SK-N-SH (cell line): ENCODE measurements at regions of chr13 and their contacts with region 1.

Region 1: GRCh38 chr13:26698392-26699196 is 62.0 kb downstream of the GPR12 start:
- DNase-seq: peak; percentile 87
- H3K4me3 ChIP-seq: peak overlapping the region in 1 of 2 experiments; percentile 15; a peak in 2 of 4 replicates
- H3K27ac ChIP-seq: no peak overlapping the region
- H3K4me1 ChIP-seq: peaks cover 0 to 4% of the 10 kb centered on the region in 2 experiments; a peak in 1 of 4 replicates
- H3K27me3 ChIP-seq: no peaks in the 10 kb centered on the region
- CTCF ChIP-seq: peak; percentile 96
- EP300 ChIP-seq: no peak
- RAD21 ChIP-seq: peak; percentile 100

Region 2: GRCh38 chr13:26202365-26202972 is 496.1 kb before region 1 on chr13:
- CTCF ChIA-PET with region 1: interaction called, 10 read pairs
- POLR2A ChIA-PET with region 1: no interaction called
- DNase-seq: no peak
- H3K4me3 ChIP-seq: no peak overlapping the region
- H3K27ac ChIP-seq: peak overlapping the region in 1 of 2 experiments; percentile 64; a peak in 3 of 4 replicates
- H3K4me1 ChIP-seq: peaks cover 0 to 18% of the 10 kb centered on the region in 2 experiments; a peak in 1 of 4 replicates
- H3K27me3 ChIP-seq: no peaks in the 10 kb centered on the region
- CTCF ChIP-seq: no peak
- EP300 ChIP-seq: no peak; a peak in 1 of 4 replicates
- RAD21 ChIP-seq: no peak

Region 3: DNA sequence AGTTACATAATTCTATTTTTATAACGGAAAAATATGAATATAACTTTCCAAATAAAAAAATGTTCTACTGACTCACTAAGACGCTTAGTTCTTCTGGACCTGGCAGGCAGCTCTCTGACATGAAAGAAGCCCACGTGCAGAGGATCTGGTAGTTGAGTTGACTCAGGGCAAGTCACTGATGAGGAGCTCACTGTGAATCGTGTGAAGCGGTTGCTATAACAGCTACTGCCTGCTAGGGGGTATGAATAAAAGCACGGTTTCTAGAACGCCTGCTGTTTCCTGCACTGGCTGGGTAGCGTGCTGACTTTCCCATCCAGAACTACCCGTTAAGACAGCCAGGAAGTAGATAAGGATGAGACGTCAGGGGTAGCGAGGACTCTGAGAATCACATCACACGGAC is 195.8 kb before region 1 on chr13:
- CTCF ChIA-PET with region 1: interaction called, 57 read pairs
- POLR2A ChIA-PET with region 1: no interaction called
- DNase-seq: no peak
- H3K4me3 ChIP-seq: no peak overlapping the region
- H3K27ac ChIP-seq: no peak overlapping the region
- H3K4me1 ChIP-seq: peaks cover 10 to 20% of the 10 kb centered on the region in 2 experiments; a peak in 3 of 4 replicates
- H3K27me3 ChIP-seq: no peaks in the 10 kb centered on the region
- CTCF ChIP-seq: no peak
- EP300 ChIP-seq: no peak
- RAD21 ChIP-seq: no peak

Region 4: DNA sequence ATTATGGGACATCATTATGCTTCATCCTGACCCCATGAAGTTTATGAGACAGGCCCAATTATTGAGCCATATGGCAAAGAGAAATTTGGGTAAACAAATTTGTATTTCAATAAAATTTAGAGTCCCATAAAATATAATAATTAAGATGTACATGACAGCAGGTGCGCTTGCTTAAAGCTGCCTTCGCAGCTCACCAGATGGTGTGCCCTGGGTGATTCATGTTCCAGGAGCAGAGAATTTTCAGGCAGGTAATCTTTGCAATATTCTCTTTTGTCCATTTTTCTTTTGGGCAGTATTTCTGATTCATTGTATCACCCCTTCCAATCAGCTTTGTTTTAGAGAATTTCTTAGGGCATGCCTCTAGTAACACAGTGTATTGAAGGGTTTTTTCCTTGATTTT is 180.7 kb before region 1 on chr13:
- CTCF ChIA-PET with region 1: no interaction called
- POLR2A ChIA-PET with region 1: no interaction called
- DNase-seq: no peak
- H3K4me3 ChIP-seq: no peak overlapping the region
- H3K27ac ChIP-seq: no peak overlapping the region
- H3K4me1 ChIP-seq: no peaks in the 10 kb centered on the region
- H3K27me3 ChIP-seq: no peaks in the 10 kb centered on the region; the same call in 1 of the 2 replicates
- CTCF ChIP-seq: no peak
- EP300 ChIP-seq: no peak
- RAD21 ChIP-seq: no peak

Region 5: DNA sequence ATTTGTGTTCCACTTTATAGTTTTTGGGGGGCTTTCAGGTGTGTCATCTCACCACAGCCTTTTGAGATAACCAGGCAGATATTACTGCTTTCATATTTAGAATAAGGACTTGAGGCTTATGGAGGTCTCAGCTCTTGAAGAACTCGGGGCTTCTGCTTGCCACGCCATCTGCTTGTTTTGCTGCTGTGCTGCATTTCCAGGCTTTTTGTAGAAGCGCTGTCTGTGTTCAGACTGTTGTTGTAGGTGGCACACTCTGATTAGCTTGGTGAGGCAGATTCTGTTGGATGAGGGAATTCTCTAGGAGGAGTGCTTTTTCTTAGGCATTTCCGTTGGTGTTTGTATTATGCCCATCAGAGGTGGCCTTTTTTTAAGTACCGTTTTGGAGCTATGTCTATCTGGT is 83.9 kb before region 1 on chr13:
- CTCF ChIA-PET with region 1: interaction called, 12 read pairs
- POLR2A ChIA-PET with region 1: no interaction called
- DNase-seq: no peak
- H3K4me3 ChIP-seq: no peak overlapping the region
- H3K27ac ChIP-seq: peak overlapping the region in 1 of 2 experiments; percentile 43; a peak in 2 of 4 replicates
- H3K4me1 ChIP-seq: peaks cover 0 to 4% of the 10 kb centered on the region in 2 experiments; a peak in 2 of 4 replicates
- H3K27me3 ChIP-seq: no peaks in the 10 kb centered on the region
- CTCF ChIP-seq: no peak
- EP300 ChIP-seq: no peak
- RAD21 ChIP-seq: no peak

Region 6: DNA sequence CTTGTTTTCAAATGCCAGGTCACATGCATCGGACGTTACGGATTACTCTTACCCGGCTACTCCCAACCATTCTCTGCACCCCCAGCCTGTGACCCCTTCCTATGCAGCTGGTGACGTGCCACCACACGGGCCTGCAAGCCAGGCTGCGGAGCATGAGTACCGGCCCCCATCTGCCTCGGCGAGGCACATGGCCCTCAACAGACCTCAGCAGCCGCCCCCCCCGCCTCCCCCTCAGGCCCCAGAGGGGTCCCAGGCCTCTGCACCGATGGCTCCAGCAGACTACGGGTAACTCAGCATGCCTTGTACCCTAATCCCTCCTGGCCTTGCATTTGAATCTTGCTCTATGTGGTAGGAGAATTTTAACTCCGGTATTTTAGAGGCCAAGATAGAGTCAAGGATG is 17.6 kb before region 1 on chr13:
- CTCF ChIA-PET with region 1: interaction called, 25 read pairs
- POLR2A ChIA-PET with region 1: no interaction called
- DNase-seq: no peak
- H3K4me3 ChIP-seq: no peak overlapping the region
- H3K27ac ChIP-seq: no peak overlapping the region
- H3K4me1 ChIP-seq: peaks cover 5 to 7% of the 10 kb centered on the region in 2 experiments; a peak in 1 of 4 replicates
- H3K27me3 ChIP-seq: no peaks in the 10 kb centered on the region
- CTCF ChIP-seq: no peak
- EP300 ChIP-seq: no peak
- RAD21 ChIP-seq: no peak

Region 7: GRCh38 chr13:26929971-26930730 is 231.6 kb after region 1 on chr13:
- CTCF ChIA-PET with region 1: interaction called, 13 read pairs
- POLR2A ChIA-PET with region 1: no interaction called
- DNase-seq: peak; percentile 79
- H3K4me3 ChIP-seq: peak overlapping the region; percentile 31 to 51
- H3K27ac ChIP-seq: no peak overlapping the region
- H3K4me1 ChIP-seq: peaks cover 0 to 2% of the 10 kb centered on the region in 2 experiments; a peak in 1 of 4 replicates
- H3K27me3 ChIP-seq: 0 out of 2 replicates have a peak, but pooled peaks cover 2% of the 10 kb centered on the region
- CTCF ChIP-seq: peak; percentile 97
- EP300 ChIP-seq: no peak
- RAD21 ChIP-seq: peak; percentile 89